ENCODE measurements at regions of chr3 and their contacts with region 1.

Region 1: GRCh38 chr3:151168269-151169094 is 34.5 kb downstream of the GPR171 start:
- DNase-seq: peak; percentile 93
- H3K4me3 Mint-ChIP-seq: no peak overlapping the region
- H3K27ac Mint-ChIP-seq: no peak overlapping the region
- H3K4me1 Mint-ChIP-seq: peaks cover 37% of the 10 kb centered on the region
- H3K27me3 Mint-ChIP-seq: no peaks in the 10 kb centered on the region

Region 2: DNA sequence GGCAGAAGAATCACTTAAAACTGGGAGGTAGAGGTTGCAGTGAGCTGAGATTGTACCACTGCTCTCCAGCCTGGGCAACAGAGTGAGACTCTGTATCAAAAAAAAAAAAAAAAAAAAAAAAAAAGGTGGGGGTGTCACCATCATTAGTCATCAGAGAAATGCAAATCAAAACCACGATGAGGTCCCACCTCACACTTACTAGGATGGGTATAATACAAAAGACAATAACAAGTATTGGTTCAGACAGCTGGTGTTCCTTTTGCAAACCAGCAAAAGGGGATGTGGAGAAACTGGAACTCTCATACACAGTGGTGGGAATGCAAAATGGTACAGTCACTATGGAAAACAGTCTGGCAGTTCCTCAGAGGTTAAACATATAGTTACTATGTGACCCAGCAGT is 839.1 kb before region 1 on chr3:
- CTCF ChIA-PET with region 1: no interaction called
- intact Hi-C with region 1: no loop called
- DNase-seq: peak; percentile 14
- H3K4me3 Mint-ChIP-seq: no peak overlapping the region
- H3K27ac Mint-ChIP-seq: no peak overlapping the region
- H3K4me1 Mint-ChIP-seq: peaks cover 4% of the 10 kb centered on the region
- H3K27me3 Mint-ChIP-seq: peaks cover 7% of the 10 kb centered on the region

Region 3: DNA sequence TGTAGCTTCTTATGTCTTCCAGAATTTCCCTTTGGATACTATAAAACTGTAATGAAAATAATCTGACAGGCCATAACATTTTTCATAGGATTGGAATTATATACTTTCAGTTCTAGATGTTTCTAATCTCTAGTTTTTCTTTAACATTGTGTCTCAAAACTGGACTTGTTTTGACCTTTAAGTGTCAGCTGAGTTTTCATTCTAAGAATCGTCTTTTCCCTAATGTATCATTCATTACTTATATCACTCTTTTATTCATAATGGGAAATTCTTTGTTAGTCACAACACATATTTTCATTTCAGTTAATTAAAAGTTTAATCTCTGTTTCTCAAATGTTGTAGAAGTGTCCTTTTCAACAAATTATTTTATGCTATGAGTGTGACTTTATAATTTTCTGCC is 22.6 kb after region 1 on chr3:
- CTCF ChIA-PET with region 1: interaction called, 18 read pairs
- intact Hi-C with region 1: loop called (anchors 2 kb)
- DNase-seq: no peak
- H3K4me3 Mint-ChIP-seq: peak overlapping the region; percentile 41
- H3K27ac Mint-ChIP-seq: peak overlapping the region; percentile 93
- H3K4me1 Mint-ChIP-seq: peaks cover 68% of the 10 kb centered on the region
- H3K27me3 Mint-ChIP-seq: no peaks in the 10 kb centered on the region

Region 4: DNA sequence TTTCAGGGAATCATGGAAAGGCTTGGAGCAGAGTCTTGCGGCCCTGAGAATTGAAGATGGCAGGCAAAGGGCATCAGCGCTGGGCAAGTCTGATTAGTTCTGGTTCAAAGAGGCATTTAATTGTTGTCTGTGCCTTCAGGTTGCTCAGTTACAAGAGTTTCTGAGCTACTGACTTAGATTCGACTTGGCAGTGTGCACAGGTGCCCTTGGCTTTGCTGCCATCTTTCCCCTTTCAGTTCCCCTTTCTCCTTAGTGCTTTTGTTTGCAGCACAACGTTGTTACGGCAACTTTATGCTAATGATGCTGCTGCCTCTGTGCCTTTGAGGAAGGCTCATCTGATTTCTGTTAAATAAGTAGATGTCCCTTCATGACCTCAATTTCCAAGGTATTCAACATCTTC is 97.4 kb after region 1 on chr3:
- CTCF ChIA-PET with region 1: interaction called, 20 read pairs
- intact Hi-C with region 1: no loop called
- DNase-seq: no peak
- H3K4me3 Mint-ChIP-seq: no peak overlapping the region
- H3K27ac Mint-ChIP-seq: no peak overlapping the region
- H3K4me1 Mint-ChIP-seq: peaks cover 17% of the 10 kb centered on the region
- H3K27me3 Mint-ChIP-seq: no peaks in the 10 kb centered on the region

Region 5: DNA sequence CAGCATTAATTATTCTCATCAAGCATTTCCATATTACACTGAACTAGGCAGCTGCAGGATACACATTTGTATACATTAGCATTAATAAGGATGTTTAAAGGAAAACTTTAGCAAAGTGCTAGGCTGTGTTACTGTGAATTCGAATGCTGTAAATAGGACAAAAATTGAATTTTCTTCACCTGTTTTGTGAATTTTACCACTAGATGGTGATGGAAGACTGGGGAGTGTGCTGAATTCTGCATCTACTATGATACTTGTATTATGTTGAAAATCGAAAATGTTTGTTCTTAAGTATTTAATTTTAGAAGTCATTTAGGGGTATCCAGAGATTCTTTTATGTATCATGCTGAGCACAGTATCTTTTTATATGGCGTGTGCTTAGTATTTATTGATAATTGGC is 122.2 kb after region 1 on chr3:
- CTCF ChIA-PET with region 1: interaction called, 37 read pairs
- intact Hi-C with region 1: no loop called
- DNase-seq: no peak
- H3K4me3 Mint-ChIP-seq: no peak overlapping the region
- H3K27ac Mint-ChIP-seq: no peak overlapping the region
- H3K4me1 Mint-ChIP-seq: peaks cover 2% of the 10 kb centered on the region
- H3K27me3 Mint-ChIP-seq: peaks cover 2% of the 10 kb centered on the region

Region 6: DNA sequence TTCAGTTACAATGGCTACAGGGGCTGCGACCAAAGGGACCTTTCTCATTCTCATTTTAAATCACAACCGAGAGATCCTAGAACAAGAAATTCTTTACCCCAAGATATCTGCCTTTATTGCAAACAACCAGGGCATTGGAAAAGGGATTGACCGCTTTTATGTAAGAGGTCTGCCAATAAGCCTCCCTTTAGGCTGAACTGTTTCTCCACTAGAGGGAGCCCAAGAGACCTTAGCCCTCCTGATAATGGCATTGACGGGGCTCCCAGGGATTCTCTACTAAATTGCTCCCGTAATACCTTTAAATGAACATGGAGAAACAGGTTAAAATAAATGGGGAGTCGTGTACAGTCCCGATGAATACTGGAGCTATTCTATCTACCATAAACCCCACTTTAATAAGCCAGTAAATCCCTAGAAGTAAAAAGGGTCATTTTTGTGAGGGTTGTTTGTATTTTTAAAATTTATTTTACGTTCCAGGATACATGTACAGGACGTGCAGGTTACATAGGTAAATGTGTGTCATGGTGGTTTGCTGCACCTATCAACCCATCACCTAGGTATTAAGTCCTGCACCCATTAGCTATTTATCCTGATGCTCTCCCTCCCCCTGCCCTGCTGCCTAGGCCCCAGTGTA is 299.9 kb after region 1 on chr3:
- CTCF ChIA-PET with region 1: no interaction called
- intact Hi-C with region 1: loop called (anchors 10 kb)
- DNase-seq: peak; percentile 40
- H3K4me3 Mint-ChIP-seq: no peak overlapping the region
- H3K27ac Mint-ChIP-seq: no peak overlapping the region
- H3K4me1 Mint-ChIP-seq: no peaks in the 10 kb centered on the region
- H3K27me3 Mint-ChIP-seq: peaks cover 4% of the 10 kb centered on the region

Region 7: DNA sequence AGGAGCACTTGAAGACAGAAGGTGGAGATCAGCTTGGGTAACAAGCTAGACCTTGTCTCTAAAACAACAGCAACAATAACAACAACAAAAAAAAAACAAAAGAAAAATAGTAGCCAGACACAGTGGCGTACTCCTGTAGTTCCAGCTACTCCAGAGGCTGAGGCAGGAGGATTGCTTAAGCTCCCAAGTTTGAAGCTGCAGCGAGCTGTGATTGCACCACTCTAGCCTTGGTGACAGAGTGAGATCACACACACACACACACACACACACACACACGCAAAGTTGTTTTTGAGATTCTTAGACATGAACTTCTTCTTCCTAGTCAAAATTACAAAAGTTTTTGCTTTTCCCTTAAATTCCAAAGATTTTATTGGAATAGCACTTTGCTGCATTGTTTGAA is 385.4 kb after region 1 on chr3:
- CTCF ChIA-PET with region 1: no interaction called
- intact Hi-C with region 1: no loop called
- DNase-seq: no peak
- H3K4me3 Mint-ChIP-seq: no peak overlapping the region
- H3K27ac Mint-ChIP-seq: no peak overlapping the region
- H3K4me1 Mint-ChIP-seq: no peaks in the 10 kb centered on the region
- H3K27me3 Mint-ChIP-seq: no peaks in the 10 kb centered on the region